BJ (cell line): ENCODE measurements at regions of chr7 and their contacts with region 1.

Region 1: DNA sequence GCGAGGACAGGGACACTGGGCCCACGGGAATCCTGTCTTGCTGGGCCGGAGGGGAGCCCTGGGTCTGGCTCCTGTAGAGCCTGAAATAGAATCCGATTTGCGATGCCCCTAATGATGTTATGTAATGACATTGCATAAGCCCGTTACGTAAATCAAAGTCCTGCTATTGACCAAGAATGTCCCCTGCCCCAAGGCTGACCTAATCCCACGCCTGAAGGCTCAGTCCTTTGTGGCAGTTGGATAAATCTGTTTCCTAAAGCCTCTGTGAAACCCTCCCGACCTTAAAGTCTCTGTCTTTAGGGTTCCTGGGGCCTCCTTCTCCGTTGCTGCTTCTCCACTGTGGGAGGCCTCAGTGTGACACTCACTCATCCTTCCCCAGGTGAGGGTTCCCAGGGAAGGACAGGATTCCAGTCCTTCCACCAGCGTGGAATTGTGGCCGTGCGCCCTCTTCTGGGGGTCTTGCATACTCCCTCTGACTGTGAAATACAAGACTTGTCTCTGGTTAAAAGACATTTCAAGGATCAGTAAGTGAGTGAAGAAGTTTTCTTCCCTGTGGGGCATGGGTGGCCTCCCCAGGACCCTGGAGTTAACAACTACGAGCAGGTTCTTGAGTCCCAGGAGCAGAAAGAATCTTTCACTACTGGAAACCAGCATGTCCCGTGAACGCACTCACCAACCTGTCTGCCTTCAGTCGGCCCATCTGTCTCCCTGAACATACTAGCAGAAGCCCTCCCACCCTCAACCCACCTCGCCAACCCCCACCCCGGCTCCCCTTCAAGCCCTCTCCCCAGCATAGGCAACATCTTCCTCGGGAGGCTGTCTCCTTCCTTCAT is 19.8 kb downstream of the ZNF467 start:
- DNase-seq: no peak
- H3K4me3 ChIP-seq: no peak overlapping the region
- H3K27me3 ChIP-seq: peaks cover 4% of the 10 kb centered on the region
- CTCF ChIP-seq: peak; percentile 78

Region 2: DNA sequence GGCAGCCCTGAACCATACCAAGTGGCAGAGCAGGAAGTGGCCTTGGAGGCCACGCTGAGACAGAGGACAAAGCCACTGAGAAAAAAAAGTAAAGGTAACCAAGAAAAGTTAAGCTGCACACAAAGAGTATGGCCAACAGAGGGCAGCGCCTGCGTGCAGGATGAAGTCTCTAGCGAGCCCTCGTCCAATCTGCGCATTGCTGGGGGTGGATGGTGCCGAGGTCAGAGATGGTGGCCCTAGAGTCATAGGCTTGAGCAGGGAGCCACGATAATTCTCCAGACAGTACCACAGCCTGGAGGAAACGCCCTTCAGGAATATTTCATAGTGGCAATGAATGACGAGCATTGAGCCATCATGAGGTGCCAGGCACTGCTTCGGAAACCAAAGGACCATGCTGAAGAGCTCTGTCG is 129.8 kb after region 1 on chr7:
- CTCF ChIA-PET with region 1: no interaction called
- POLR2A ChIA-PET with region 1: interaction called, 14 read pairs
- DNase-seq: no peak
- H3K4me3 ChIP-seq: no peak overlapping the region
- H3K27me3 ChIP-seq: no peaks in the 10 kb centered on the region
- CTCF ChIP-seq: peak; percentile 70